Activated CD4-positive, alpha-beta T cell treated with anti-CD3 and anti-CD28 coated beads for 36 hours (primary cell): ENCODE measurements at regions of chr3 and their contacts with region 1.

Region 1: DNA sequence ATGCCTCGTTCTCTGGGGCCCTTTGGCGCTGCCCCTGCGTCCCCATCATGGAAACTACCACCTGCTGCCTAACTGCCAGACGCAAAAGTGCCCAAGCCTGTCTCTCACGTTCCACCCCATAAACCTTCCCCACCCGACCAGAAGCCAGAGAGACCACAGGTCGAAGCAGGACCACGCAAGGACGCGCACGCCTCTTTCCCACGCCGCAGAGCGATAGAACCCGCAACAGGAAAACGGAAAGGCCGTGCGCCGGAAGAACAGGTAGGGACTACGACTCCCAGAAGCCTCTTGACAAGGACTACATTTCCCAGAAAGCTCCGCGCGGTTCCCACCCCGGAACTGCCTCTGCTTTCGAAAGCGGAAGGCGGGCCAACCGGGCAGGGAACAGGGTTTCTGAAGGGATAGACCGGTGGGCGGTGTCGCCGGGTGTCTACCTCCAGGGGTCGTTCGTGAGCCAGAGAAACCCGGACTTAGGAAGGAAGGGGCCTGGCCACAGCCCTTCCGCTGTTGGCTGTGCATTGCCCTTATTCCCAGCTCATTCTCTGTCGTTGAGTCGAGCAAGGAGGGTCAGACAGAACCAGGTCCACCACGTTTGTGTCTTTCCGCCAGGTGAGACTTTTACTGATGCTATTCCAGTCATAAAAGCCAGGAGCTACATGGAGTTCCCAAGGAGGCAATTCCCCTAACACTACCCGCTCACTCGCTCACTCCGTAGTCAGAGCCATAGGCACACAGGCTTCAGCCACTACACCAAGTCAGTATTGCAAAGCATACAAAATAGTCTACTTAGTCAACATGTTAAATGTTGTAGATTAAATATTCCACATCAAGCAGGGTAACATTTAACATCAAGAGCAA is 56.6 kb upstream of the ZBTB38 start:
- DNase-seq: peak; percentile 99
- ATAC-seq: peak; percentile 90
- H3K4me3 Mint-ChIP-seq: peak overlapping the region; percentile 81
- H3K27ac Mint-ChIP-seq: peak overlapping the region; percentile 98
- H3K4me1 Mint-ChIP-seq: peaks cover 45% of the 10 kb centered on the region
- H3K27me3 Mint-ChIP-seq: no peaks in the 10 kb centered on the region

Region 2: DNA sequence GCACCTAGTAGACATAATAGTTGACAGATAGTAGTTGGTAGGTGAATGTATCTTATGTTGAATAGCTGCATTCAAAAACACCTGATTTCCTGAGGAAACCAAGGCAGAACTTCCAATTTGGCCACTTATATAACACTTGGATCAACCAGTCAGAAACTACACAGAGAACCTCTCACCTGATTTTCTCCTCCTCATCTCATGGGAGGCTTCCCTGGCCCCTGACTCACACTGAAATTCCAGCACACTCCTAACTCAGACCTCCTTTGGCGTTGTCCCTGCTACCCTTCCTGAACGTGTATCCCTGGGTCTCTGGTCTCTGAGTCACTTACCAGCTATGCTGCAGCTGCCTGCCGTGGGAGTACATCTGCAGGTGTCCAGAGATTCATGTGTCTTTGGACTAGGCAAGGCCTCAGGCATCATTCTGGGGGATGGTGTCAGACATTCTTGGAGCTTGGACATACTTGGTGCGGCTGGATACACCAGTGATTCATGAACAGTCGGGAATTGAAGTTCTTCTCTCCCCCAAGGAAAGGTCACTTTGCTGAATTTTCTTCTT is 782.7 kb before region 1 on chr3:
- CTCF ChIA-PET with region 1: no interaction called
- POLR2A ChIA-PET with region 1: no interaction called
- intact Hi-C with region 1: no loop called
- DNase-seq: no peak
- ATAC-seq: no peak
- H3K4me3 Mint-ChIP-seq: no peak overlapping the region
- H3K27ac Mint-ChIP-seq: no peak overlapping the region
- H3K4me1 Mint-ChIP-seq: no peaks in the 10 kb centered on the region
- H3K27me3 Mint-ChIP-seq: peaks cover 10% of the 10 kb centered on the region

Region 3: GRCh38 chr3:141105828-141106628 is 205.7 kb before region 1 on chr3:
- CTCF ChIA-PET with region 1: no interaction called
- POLR2A ChIA-PET with region 1: no interaction called
- intact Hi-C with region 1: no loop called
- DNase-seq: peak; percentile 78
- ATAC-seq: peak; percentile 68
- H3K4me3 Mint-ChIP-seq: no peak overlapping the region
- H3K27ac Mint-ChIP-seq: no peak overlapping the region
- H3K4me1 Mint-ChIP-seq: no peaks in the 10 kb centered on the region
- H3K27me3 Mint-ChIP-seq: no peaks in the 10 kb centered on the region

Region 4: GRCh38 chr3:141323936-141324704 is 12.4 kb after region 1 on chr3:
- CTCF ChIA-PET with region 1: interaction called, 10 read pairs
- POLR2A ChIA-PET with region 1: no interaction called
- intact Hi-C with region 1: no loop called
- DNase-seq: no peak
- ATAC-seq: no peak
- H3K4me3 Mint-ChIP-seq: no peak overlapping the region
- H3K27ac Mint-ChIP-seq: no peak overlapping the region
- H3K4me1 Mint-ChIP-seq: peaks cover 39% of the 10 kb centered on the region
- H3K27me3 Mint-ChIP-seq: no peaks in the 10 kb centered on the region

Region 5: DNA sequence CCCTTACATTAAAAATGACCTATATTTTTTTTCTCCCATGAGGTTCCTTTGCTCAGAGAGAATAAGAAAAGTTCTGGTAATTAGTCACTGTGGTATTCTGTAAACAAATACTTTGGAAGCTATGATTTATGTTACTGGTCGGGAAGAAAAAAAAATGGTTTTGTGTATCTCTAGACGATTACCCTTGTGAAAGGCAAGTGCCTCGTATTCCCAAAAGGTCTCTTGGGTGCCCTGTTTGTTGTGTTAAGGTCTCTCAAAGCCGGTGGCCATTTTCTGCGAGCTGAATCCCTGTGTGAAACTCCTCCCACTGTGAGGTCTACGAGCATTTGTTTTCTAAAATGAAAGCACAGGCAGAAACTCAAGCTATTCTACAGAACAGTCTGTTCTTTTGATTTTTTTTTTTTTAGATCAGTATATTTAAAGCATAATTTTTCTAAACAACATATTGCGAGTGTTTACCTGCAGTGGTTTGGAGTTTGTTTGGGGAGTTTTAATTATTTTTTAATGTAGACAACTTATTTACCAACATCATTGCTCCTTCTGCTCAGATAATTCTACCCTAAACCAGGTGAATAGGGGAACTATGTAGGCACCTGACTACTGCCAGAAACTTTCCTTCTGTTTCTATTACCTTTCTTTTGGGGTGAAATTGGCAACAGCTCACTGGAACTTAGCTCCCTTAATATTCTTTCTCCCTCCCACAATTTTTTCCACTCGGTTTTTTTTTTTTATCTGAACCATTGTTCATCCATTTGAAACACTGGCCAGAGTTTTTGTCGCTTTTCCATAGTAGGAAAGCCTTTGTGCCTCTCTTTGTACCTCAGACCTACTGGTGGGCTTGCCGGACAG is 100.6 kb after region 1 on chr3:
- CTCF ChIA-PET with region 1: interaction called, 9 read pairs
- POLR2A ChIA-PET with region 1: interaction called, 3 read pairs
- intact Hi-C with region 1: loop called in 1 of 2 experiments (anchors 1 kb)
- DNase-seq: peak; percentile 71
- ATAC-seq: peak; percentile 24
- H3K4me3 Mint-ChIP-seq: peak overlapping the region; percentile 74
- H3K27ac Mint-ChIP-seq: peak overlapping the region; percentile 99
- H3K4me1 Mint-ChIP-seq: peaks cover 89% of the 10 kb centered on the region
- H3K27me3 Mint-ChIP-seq: no peaks in the 10 kb centered on the region

Region 6: DNA sequence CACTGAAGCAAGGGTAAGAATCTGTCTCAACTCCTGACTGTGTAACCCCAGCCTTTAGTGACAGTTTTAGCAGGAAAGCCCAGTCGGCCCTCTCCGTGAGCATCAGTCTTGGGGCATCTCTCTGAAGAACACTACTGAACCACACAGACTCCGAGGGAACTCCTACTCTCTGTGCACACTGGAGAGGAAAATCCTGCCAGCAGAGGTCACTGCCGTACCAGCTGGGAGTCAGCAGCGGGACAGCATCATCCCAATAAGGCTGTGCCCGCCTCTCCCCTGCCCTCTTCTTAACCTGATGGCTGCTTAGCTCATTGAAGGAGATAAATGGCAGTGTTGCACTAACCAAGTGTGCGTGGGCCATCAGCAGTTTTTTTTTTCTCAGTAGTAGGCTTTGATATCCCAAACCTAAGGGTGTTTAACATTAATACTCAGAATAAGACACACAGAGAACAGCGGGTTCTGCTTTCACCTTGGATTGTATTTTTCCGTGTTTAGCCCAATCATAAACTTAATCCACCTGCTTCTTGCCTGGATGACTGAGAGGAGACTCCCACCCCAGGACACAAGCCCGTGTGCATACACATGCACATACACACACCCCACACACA is 148.5 kb after region 1 on chr3:
- CTCF ChIA-PET with region 1: interaction called, 111 read pairs
- POLR2A ChIA-PET with region 1: interaction called, 4 read pairs
- intact Hi-C with region 1: no loop called
- DNase-seq: peak; percentile 96
- ATAC-seq: peak; percentile 100
- H3K4me3 Mint-ChIP-seq: no peak overlapping the region
- H3K27ac Mint-ChIP-seq: no peak overlapping the region
- H3K4me1 Mint-ChIP-seq: peaks cover 7% of the 10 kb centered on the region
- H3K27me3 Mint-ChIP-seq: no peaks in the 10 kb centered on the region

Region 7: GRCh38 chr3:141605883-141606282 is 294.2 kb after region 1 on chr3:
- CTCF ChIA-PET with region 1: no interaction called
- POLR2A ChIA-PET with region 1: no interaction called
- intact Hi-C with region 1: no loop called
- DNase-seq: no peak
- ATAC-seq: no peak
- H3K4me3 Mint-ChIP-seq: no peak overlapping the region
- H3K27ac Mint-ChIP-seq: no peak overlapping the region
- H3K4me1 Mint-ChIP-seq: peaks cover 3% of the 10 kb centered on the region
- H3K27me3 Mint-ChIP-seq: no peaks in the 10 kb centered on the region

Region 8: GRCh38 chr3:141738022-141738890 is 426.5 kb after region 1 on chr3 and contains the start of gene RNF7:
- CTCF ChIA-PET with region 1: no interaction called
- POLR2A ChIA-PET with region 1: no interaction called
- intact Hi-C with region 1: loop called in 1 of 2 experiments (anchors 1 kb)
- DNase-seq: peak; percentile 98
- ATAC-seq: peak; percentile 92
- H3K4me3 Mint-ChIP-seq: peak within 1 kb of the TSS; percentile 91
- H3K27ac Mint-ChIP-seq: peak within 1 kb of the TSS; percentile 99
- H3K4me1 Mint-ChIP-seq: peaks cover 39% of the 10 kb centered on the region
- H3K27me3 Mint-ChIP-seq: no peaks in the 10 kb centered on the region
- total RNA-seq, gene RNF7: 38.0 to 67.2 TPM

Region 9: GRCh38 chr3:142447852-142448823 is 1136.4 kb after region 1 on chr3 and contains the start of gene XRN1:
- CTCF ChIA-PET with region 1: no interaction called
- POLR2A ChIA-PET with region 1: no interaction called
- intact Hi-C with region 1: loop called in 1 of 2 experiments (anchors 2 kb)
- DNase-seq: peak; percentile 98
- ATAC-seq: peak; percentile 85
- H3K4me3 Mint-ChIP-seq: peak within 1 kb of the TSS; percentile 95
- H3K27ac Mint-ChIP-seq: peak within 1 kb of the TSS; percentile 98
- H3K4me1 Mint-ChIP-seq: peaks cover 32% of the 10 kb centered on the region
- H3K27me3 Mint-ChIP-seq: no peaks in the 10 kb centered on the region
- total RNA-seq, gene XRN1: 54.2 to 117 TPM